CD8-positive, alpha-beta T cell (primary cell): ENCODE measurements at regions of chr16 and their contacts with region 1.

Region 1: GRCh38 chr16:22098405-22099255 is 6.3 kb downstream of the VWA3A start:
- DNase-seq: peak in 2 of 9 experiments; percentile 53 to 65
- ATAC-seq: peak; percentile 69
- H3K4me3 ChIP-seq: no peak overlapping the region
- H3K4me3 Mint-ChIP-seq: no peak overlapping the region
- H3K27ac ChIP-seq: no peak overlapping the region
- H3K27ac Mint-ChIP-seq: no peak overlapping the region
- H3K4me1 ChIP-seq: no peaks in the 10 kb centered on the region
- H3K4me1 Mint-ChIP-seq: peaks cover 2% of the 10 kb centered on the region
- H3K27me3 ChIP-seq: peaks cover 0 to 6% of the 10 kb centered on the region in 2 experiments
- H3K27me3 Mint-ChIP-seq: peaks cover 23% of the 10 kb centered on the region
- CTCF ChIP-seq: peak; percentile 44

Region 2: GRCh38 chr16:22124583-22125284 is 26.1 kb after region 1 on chr16:
- CTCF ChIA-PET with region 1: no interaction called
- POLR2A ChIA-PET with region 1: no interaction called
- intact Hi-C with region 1: loop called in 1 of 2 experiments (anchors 1 kb)
- DNase-seq: no peak
- ATAC-seq: no peak
- H3K4me3 ChIP-seq: no peak overlapping the region
- H3K4me3 Mint-ChIP-seq: no peak overlapping the region
- H3K27ac ChIP-seq: no peak overlapping the region
- H3K27ac Mint-ChIP-seq: no peak overlapping the region
- H3K4me1 ChIP-seq: no peaks in the 10 kb centered on the region
- H3K4me1 Mint-ChIP-seq: no peaks in the 10 kb centered on the region
- H3K27me3 ChIP-seq: no peaks in the 10 kb centered on the region
- H3K27me3 Mint-ChIP-seq: peaks cover 5% of the 10 kb centered on the region
- CTCF ChIP-seq: no peak